Endothelial cell of umbilical vein (primary cell): ENCODE measurements at regions of chr3 and their contacts with region 1.

Region 1: GRCh38 chr3:111851511-111851954 is 7.5 kb upstream of the PHLDB2 start:
- DNase-seq: peak; percentile 93
- H3K4me3 ChIP-seq: peak overlapping the region in 1 of 3 experiments; percentile 16
- H3K27ac ChIP-seq: peak overlapping the region; percentile 90
- H3K4me1 ChIP-seq: peaks cover 50% of the 10 kb centered on the region
- H3K27me3 ChIP-seq: no peaks in the 10 kb centered on the region
- CTCF ChIP-seq: no peak
- POLR2A ChIP-seq: peak; percentile 83

Region 2: DNA sequence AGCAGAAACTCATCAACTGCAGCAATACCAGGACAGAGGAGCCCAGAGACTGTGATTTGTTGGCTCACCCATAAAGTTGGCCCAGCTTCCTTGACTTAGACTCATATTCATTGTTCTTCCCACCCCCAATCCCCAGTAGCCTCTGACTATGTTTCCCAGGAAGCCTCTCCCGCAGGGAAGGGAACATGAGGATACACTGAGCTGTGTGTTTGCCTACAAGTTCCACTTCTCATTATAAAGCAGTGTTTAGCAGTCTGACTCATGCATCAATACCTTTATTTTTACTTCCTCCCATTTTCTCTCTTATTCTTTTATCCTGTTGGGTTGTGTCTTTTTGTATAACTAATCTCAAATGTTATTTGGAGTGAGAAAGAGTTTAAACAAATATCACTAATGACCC is 104.0 kb before region 1 on chr3:
- CTCF ChIA-PET with region 1: interaction called, 4 read pairs
- POLR2A ChIA-PET with region 1: no interaction called
- dilution Hi-C with region 1: loop called (anchors 25 kb)
- intact Hi-C with region 1: loop called (anchors 1 kb)
- DNase-seq: peak; percentile 40
- H3K4me3 ChIP-seq: no peak overlapping the region
- H3K27ac ChIP-seq: peak overlapping the region; percentile 70
- H3K4me1 ChIP-seq: peaks cover 14% of the 10 kb centered on the region
- H3K27me3 ChIP-seq: no peaks in the 10 kb centered on the region
- CTCF ChIP-seq: no peak
- POLR2A ChIP-seq: no peak

Region 3: GRCh38 chr3:111781561-111782446 is 69.7 kb before region 1 on chr3:
- CTCF ChIA-PET with region 1: no interaction called
- POLR2A ChIA-PET with region 1: no interaction called
- dilution Hi-C with region 1: no loop called
- intact Hi-C with region 1: no loop called
- DNase-seq: no peak
- H3K4me3 ChIP-seq: no peak overlapping the region
- H3K27ac ChIP-seq: no peak overlapping the region
- H3K4me1 ChIP-seq: no peaks in the 10 kb centered on the region
- H3K27me3 ChIP-seq: no peaks in the 10 kb centered on the region
- CTCF ChIP-seq: no peak
- POLR2A ChIP-seq: no peak

Region 4: GRCh38 chr3:111824351-111824750 is 27.2 kb before region 1 on chr3:
- CTCF ChIA-PET with region 1: no interaction called
- POLR2A ChIA-PET with region 1: no interaction called
- dilution Hi-C with region 1: no loop called
- intact Hi-C with region 1: no loop called
- DNase-seq: peak; percentile 32
- H3K4me3 ChIP-seq: no peak overlapping the region
- H3K27ac ChIP-seq: no peak overlapping the region
- H3K4me1 ChIP-seq: no peaks in the 10 kb centered on the region
- H3K27me3 ChIP-seq: no peaks in the 10 kb centered on the region
- CTCF ChIP-seq: no peak
- POLR2A ChIP-seq: no peak

Region 5: GRCh38 chr3:111956995-111957734 is 105.6 kb after region 1 on chr3:
- CTCF ChIA-PET with region 1: no interaction called
- POLR2A ChIA-PET with region 1: no interaction called
- dilution Hi-C with region 1: no loop called
- intact Hi-C with region 1: no loop called
- DNase-seq: peak; percentile 91
- H3K4me3 ChIP-seq: no peak overlapping the region
- H3K27ac ChIP-seq: peak overlapping the region; percentile 57
- H3K4me1 ChIP-seq: peaks cover 28% of the 10 kb centered on the region
- H3K27me3 ChIP-seq: no peaks in the 10 kb centered on the region
- CTCF ChIP-seq: no peak
- POLR2A ChIP-seq: no peak